ENCODE measurements at regions of chr17 and their contacts with region 1.

Region 1: DNA sequence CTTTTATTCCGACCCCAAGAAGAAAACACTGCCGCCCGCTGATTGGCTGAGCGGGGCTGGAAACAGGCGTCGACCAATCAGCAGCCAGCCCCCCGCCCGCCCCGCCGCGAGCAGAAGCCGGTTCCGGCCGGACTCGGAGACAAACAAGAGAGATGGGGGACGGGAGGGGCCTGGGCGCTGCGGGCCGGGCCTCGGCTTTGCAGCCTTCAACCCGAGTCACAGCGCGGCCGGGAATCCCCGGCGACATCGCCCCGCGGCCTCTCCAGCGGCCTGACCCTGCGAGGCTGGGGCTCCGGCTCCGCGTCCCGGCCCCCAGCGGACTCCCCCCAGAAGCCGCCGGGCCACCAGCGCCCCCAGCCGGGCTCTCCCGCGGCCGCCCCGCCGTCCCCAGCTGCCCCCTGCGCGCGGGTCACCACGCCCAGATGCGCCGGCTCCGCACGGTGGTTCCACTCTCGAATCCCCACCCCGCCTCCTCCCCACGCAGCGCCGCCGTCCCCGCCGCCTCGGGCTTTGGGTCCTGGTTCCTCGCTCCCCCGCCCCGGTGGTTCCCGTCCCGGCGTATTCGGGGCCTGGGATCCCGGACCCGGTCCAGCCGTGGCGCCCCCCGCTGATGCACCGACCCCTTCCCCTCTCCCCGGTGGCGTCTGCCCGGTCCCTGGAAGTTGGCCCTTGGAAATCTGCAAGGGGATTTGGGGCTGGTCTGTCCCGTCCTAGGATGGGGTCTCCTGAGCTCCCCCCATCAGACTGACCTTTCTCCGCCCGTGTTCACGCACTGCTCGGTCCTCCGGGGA is 417 bp upstream of the SLC43A2 start:
- DNase-seq: peak; percentile 69 to 89 (median 84)
- ATAC-seq: peak; percentile 84
- H3K4me3 ChIP-seq: peak overlapping the region; percentile 83
- H3K4me3 Mint-ChIP-seq: peak overlapping the region; percentile 92 to 96 (median 94)
- H3K27ac ChIP-seq: peak overlapping the region; percentile 74
- H3K27ac Mint-ChIP-seq: peak overlapping the region; percentile 73 to 95 (median 87)
- H3K4me1 ChIP-seq: peaks cover 5 to 20% of the 10 kb centered on the region in 2 donors
- H3K4me1 Mint-ChIP-seq: peaks cover 17 to 26% (median 22%) of the 10 kb centered on the region in 7 donors
- H3K27me3 ChIP-seq: no peaks in the 10 kb centered on the region
- H3K27me3 Mint-ChIP-seq: peaks cover 0 to 59% (median 0%) of the 10 kb centered on the region in 5 donors

Region 2: GRCh38 chr17:1275962-1276736 is 352.9 kb before region 1 on chr17:
- CTCF ChIA-PET with region 1: no interaction called
- POLR2A ChIA-PET with region 1: no interaction called
- intact Hi-C with region 1: loop called in 1 of 2 experiments (anchors 1 kb)
- DNase-seq: peak; percentile 45 to 79 (median 68)
- ATAC-seq: peak; percentile 89
- H3K4me3 ChIP-seq: no peak overlapping the region
- H3K4me3 Mint-ChIP-seq: peak overlapping the region in 7 of 10 donors; percentile 30 to 72 (median 52)
- H3K27ac ChIP-seq: no peak overlapping the region
- H3K27ac Mint-ChIP-seq: peak overlapping the region in 4 of 9 donors; percentile 10 to 77 (median 48)
- H3K4me1 ChIP-seq: peaks cover 4 to 5% of the 10 kb centered on the region in 2 donors
- H3K4me1 Mint-ChIP-seq: peaks cover 0 to 12% (median 8%) of the 10 kb centered on the region in 7 donors
- H3K27me3 ChIP-seq: peaks cover 0 to 5% of the 10 kb centered on the region in 2 donors
- H3K27me3 Mint-ChIP-seq: peaks cover 25 to 39% (median 35%) of the 10 kb centered on the region in 5 donors

Region 3: GRCh38 chr17:1455797-1456599 is 173.1 kb before region 1 on chr17 and contains the start of gene CRK:
- CTCF ChIA-PET with region 1: no interaction called
- POLR2A ChIA-PET with region 1: no interaction called
- intact Hi-C with region 1: loop called in 1 of 2 experiments (anchors 1 kb)
- DNase-seq: peak; percentile 97 to 100 (median 99)
- ATAC-seq: peak; percentile 97
- H3K4me3 ChIP-seq: peak within 1 kb of the TSS; percentile 94
- H3K4me3 Mint-ChIP-seq: peak within 1 kb of the TSS; percentile 86 to 95 (median 90)
- H3K27ac ChIP-seq: peak within 1 kb of the TSS; percentile 97
- H3K27ac Mint-ChIP-seq: peak within 1 kb of the TSS; percentile 63 to 92 (median 86)
- H3K4me1 ChIP-seq: peaks cover 18 to 37% of the 10 kb centered on the region in 2 donors
- H3K4me1 Mint-ChIP-seq: peaks cover 28 to 64% (median 48%) of the 10 kb centered on the region in 7 donors
- H3K27me3 ChIP-seq: no peaks in the 10 kb centered on the region
- H3K27me3 Mint-ChIP-seq: peaks cover 0 to 23% (median 4%) of the 10 kb centered on the region in 5 donors
- total RNA-seq, gene CRK: 16.9 to 29.0 (median 20.9) TPM

Region 4: GRCh38 chr17:1474402-1475189 is 154.5 kb before region 1 on chr17:
- CTCF ChIA-PET with region 1: no interaction called
- POLR2A ChIA-PET with region 1: no interaction called
- intact Hi-C with region 1: no loop called
- DNase-seq: no peak
- ATAC-seq: no peak
- H3K4me3 ChIP-seq: no peak overlapping the region
- H3K4me3 Mint-ChIP-seq: no peak overlapping the region
- H3K27ac ChIP-seq: no peak overlapping the region
- H3K27ac Mint-ChIP-seq: no peak overlapping the region
- H3K4me1 ChIP-seq: peaks cover 0 to 7% of the 10 kb centered on the region in 2 donors
- H3K4me1 Mint-ChIP-seq: peaks cover 15 to 19% (median 18%) of the 10 kb centered on the region in 7 donors
- H3K27me3 ChIP-seq: no peaks in the 10 kb centered on the region
- H3K27me3 Mint-ChIP-seq: no peaks in the 10 kb centered on the region

Region 5: DNA sequence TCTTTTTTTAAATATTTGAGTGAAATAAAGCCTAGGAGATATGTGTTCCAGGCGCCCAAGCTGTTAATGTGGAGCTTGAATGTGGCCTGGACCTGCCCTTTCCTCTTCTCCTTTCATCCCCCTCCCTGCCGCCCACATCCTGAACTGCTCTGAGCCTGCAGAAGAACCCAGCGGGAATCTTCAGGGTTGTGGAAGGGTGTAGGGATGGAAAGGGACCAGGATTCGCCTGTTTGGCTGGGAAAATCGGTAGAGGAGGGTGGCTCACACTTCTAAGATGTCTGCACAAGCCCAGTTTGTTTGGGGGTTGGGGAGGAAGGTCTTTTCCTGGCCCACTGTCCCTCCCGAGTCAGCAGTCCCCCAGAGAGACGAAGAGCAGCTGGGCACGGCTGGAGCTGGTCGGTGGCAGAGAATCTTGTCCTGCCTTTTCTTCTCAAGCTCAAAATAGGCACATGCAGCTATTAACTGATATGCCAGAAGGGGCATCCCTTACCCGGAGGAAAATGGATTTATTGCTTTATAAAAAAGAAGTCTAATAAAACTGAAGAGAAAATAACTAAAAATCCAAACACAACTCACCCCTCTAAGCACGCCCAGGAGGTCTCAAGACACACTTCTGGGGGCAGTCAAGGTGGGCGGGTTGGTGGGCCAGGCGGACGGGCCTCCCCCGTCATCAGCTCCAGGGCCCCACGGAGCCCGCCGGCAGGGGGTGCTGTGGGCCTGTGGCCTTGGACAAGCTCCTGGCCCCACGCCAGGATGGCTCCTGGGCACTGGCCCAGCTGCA is 54.9 kb before region 1 on chr17:
- CTCF ChIA-PET with region 1: interaction called, 17 read pairs
- POLR2A ChIA-PET with region 1: interaction called, 5 read pairs
- intact Hi-C with region 1: loop called in 1 of 2 experiments (anchors 1 kb)
- DNase-seq: peak in 7 of 9 donors; percentile 17 to 84 (median 46)
- ATAC-seq: peak; percentile 55
- H3K4me3 ChIP-seq: no peak overlapping the region
- H3K4me3 Mint-ChIP-seq: no peak overlapping the region
- H3K27ac ChIP-seq: no peak overlapping the region
- H3K27ac Mint-ChIP-seq: no peak overlapping the region
- H3K4me1 ChIP-seq: no peaks in the 10 kb centered on the region
- H3K4me1 Mint-ChIP-seq: peaks cover 0 to 2% (median 0%) of the 10 kb centered on the region in 7 donors
- H3K27me3 ChIP-seq: no peaks in the 10 kb centered on the region
- H3K27me3 Mint-ChIP-seq: peaks cover 0 to 3% (median 0%) of the 10 kb centered on the region in 5 donors

Region 6: GRCh38 chr17:1648963-1649843 is 20.2 kb after region 1 on chr17:
- CTCF ChIA-PET with region 1: interaction called, 7 read pairs
- POLR2A ChIA-PET with region 1: interaction called, 27 read pairs
- intact Hi-C with region 1: loop called (anchors 1 to 2 kb)
- DNase-seq: peak; percentile 88 to 97 (median 93)
- ATAC-seq: peak; percentile 90
- H3K4me3 ChIP-seq: peak overlapping the region; percentile 64
- H3K4me3 Mint-ChIP-seq: peak overlapping the region; percentile 65 to 81 (median 74)
- H3K27ac ChIP-seq: peak overlapping the region; percentile 69
- H3K27ac Mint-ChIP-seq: peak overlapping the region in 5 of 9 donors; percentile 38 to 58 (median 55)
- H3K4me1 ChIP-seq: peaks cover 15 to 21% of the 10 kb centered on the region in 2 donors
- H3K4me1 Mint-ChIP-seq: peaks cover 0 to 38% (median 10%) of the 10 kb centered on the region in 7 donors
- H3K27me3 ChIP-seq: no peaks in the 10 kb centered on the region
- H3K27me3 Mint-ChIP-seq: no peaks in the 10 kb centered on the region

Region 7: GRCh38 chr17:1673041-1673785 is 44.2 kb after region 1 on chr17:
- CTCF ChIA-PET with region 1: no interaction called
- POLR2A ChIA-PET with region 1: no interaction called
- intact Hi-C with region 1: no loop called
- DNase-seq: peak in 1 of 9 donors; percentile 7
- ATAC-seq: peak; percentile 26
- H3K4me3 ChIP-seq: no peak overlapping the region
- H3K4me3 Mint-ChIP-seq: no peak overlapping the region
- H3K27ac ChIP-seq: no peak overlapping the region
- H3K27ac Mint-ChIP-seq: peak overlapping the region in 5 of 9 donors; percentile 6 to 60 (median 43)
- H3K4me1 ChIP-seq: no peaks in the 10 kb centered on the region
- H3K4me1 Mint-ChIP-seq: peaks cover 19 to 45% (median 34%) of the 10 kb centered on the region in 7 donors
- H3K27me3 ChIP-seq: no peaks in the 10 kb centered on the region
- H3K27me3 Mint-ChIP-seq: no peaks in the 10 kb centered on the region